CD4-positive, alpha-beta T cell (primary cell): ENCODE measurements at regions of chr5 and their contacts with region 1.

Region 1: DNA sequence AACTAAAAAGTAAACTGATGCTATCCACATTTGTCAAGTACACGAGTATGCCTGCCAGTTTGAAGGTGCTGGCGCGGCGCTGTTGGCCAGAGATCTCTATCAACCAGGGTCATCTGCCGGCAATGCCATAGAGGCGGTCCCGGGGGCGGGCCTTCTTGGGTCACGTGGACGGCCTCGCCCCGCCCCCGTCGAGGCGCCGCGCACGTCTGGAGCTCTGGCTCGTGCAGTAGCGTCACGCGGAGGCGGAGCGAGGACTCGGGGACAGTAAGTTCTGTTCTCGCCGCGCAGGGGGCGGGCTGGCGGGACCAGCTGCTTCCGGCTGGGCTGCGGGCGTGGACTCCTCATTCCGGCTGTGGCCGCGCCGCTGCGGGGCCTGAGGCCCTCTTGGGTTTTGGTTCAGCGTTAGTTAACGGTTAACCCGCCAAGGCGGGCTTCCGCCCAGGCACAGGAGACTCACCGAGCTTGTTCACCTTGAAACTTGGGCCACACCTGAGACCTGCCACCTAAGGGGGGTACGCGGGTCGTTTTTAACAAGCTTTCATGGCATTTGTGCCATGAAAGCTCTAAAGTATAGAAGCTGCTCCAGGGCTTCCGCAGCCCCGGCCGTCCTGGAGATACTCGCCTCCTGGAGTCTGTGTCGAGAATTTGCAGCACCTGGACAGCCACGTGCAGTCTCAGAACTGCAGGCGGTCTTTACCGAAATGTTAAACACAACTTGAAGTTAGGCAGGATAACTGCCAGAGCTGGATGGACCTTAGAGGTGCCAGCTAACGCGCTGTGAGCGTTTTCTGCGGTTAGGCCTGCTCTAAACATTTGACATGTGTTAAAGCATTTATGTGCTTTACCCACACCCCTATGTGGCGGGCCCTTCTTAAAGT is at the start of gene RFESD:
- DNase-seq: peak; percentile 82 to 97 (median 90)
- ATAC-seq: peak; percentile 92
- H3K4me3 ChIP-seq: peak within 1 kb of the TSS; percentile 74
- H3K4me3 Mint-ChIP-seq: peak within 1 kb of the TSS; percentile 88
- H3K27ac ChIP-seq: peak within 1 kb of the TSS; percentile 71 to 74
- H3K27ac Mint-ChIP-seq: peak within 1 kb of the TSS; percentile 68
- H3K4me1 ChIP-seq: peaks cover 18% of the 10 kb centered on the region
- H3K4me1 Mint-ChIP-seq: peaks cover 51% of the 10 kb centered on the region
- H3K27me3 ChIP-seq: no peaks in the 10 kb centered on the region
- H3K27me3 Mint-ChIP-seq: no peaks in the 10 kb centered on the region
- CTCF ChIP-seq: no peak
- total RNA-seq, gene RFESD: 1.3 to 1.5 TPM

Region 2: DNA sequence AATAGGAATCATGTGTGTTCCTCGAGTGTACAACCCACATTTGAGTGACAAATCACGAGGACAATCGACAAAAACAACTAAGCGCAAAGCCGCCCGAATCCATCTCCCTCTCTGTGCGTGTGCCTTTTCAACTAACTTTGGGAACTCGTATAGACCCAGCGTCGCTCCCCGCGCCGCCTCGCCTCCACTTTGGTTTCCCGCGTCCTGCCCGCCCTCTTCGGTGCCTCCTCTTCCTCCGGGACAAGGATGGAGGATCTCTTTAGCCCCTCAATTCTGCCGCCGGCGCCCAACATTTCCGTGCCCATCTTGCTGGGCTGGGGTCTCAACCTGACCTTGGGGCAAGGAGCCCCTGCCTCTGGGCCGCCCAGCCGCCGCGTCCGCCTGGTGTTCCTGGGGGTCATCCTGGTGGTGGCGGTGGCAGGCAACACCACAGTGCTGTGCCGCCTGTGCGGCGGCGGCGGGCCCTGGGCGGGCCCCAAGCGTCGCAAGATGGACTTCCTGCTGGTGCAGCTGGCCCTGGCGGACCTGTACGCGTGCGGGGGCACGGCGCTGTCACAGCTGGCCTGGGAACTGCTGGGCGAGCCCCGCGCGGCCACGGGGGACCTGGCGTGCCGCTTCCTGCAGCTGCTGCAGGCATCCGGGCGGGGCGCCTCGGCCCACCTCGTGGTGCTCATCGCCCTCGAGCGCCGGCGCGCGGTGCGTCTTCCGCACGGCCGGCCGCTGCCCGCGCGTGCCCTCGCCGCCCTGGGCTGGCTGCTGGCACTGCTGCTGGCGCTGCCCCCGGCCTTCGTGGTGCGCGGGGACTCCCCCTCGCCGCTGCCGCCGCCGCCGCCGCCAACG is 26.5 kb before region 1 on chr5 and contains the start of gene GPR150:
- CTCF ChIA-PET with region 1: interaction called, 9 read pairs
- POLR2A ChIA-PET with region 1: interaction called, 87 read pairs
- intact Hi-C with region 1: no loop called
- DNase-seq: peak; percentile 33 to 86 (median 58)
- ATAC-seq: peak; percentile 60
- H3K4me3 ChIP-seq: peak within 1 kb of the TSS; percentile 83
- H3K4me3 Mint-ChIP-seq: peak within 1 kb of the TSS; percentile 95
- H3K27ac ChIP-seq: peak within 1 kb of the TSS in 1 of 2 donors; percentile 37
- H3K27ac Mint-ChIP-seq: peak within 1 kb of the TSS; percentile 69
- H3K4me1 ChIP-seq: peaks cover 48% of the 10 kb centered on the region
- H3K4me1 Mint-ChIP-seq: peaks cover 77% of the 10 kb centered on the region
- H3K27me3 ChIP-seq: no peaks in the 10 kb centered on the region
- H3K27me3 Mint-ChIP-seq: no peaks in the 10 kb centered on the region
- CTCF ChIP-seq: no peak
- total RNA-seq, gene GPR150: 0.60 to 0.75 TPM

Region 3: GRCh38 chr5:95631991-95632675 is 14.7 kb before region 1 on chr5:
- CTCF ChIA-PET with region 1: interaction called, 7 read pairs
- POLR2A ChIA-PET with region 1: interaction called, 32 read pairs
- intact Hi-C with region 1: loop called in 1 of 2 experiments (anchors 1 kb)
- DNase-seq: peak; percentile 44 to 90 (median 62)
- ATAC-seq: peak; percentile 98
- H3K4me3 ChIP-seq: no peak overlapping the region
- H3K4me3 Mint-ChIP-seq: peak overlapping the region; percentile 9
- H3K27ac ChIP-seq: peak overlapping the region; percentile 16 to 80
- H3K27ac Mint-ChIP-seq: peak overlapping the region; percentile 89
- H3K4me1 ChIP-seq: peaks cover 19% of the 10 kb centered on the region
- H3K4me1 Mint-ChIP-seq: peaks cover 42% of the 10 kb centered on the region
- H3K27me3 ChIP-seq: no peaks in the 10 kb centered on the region
- H3K27me3 Mint-ChIP-seq: no peaks in the 10 kb centered on the region
- CTCF ChIP-seq: no peak

Region 4: DNA sequence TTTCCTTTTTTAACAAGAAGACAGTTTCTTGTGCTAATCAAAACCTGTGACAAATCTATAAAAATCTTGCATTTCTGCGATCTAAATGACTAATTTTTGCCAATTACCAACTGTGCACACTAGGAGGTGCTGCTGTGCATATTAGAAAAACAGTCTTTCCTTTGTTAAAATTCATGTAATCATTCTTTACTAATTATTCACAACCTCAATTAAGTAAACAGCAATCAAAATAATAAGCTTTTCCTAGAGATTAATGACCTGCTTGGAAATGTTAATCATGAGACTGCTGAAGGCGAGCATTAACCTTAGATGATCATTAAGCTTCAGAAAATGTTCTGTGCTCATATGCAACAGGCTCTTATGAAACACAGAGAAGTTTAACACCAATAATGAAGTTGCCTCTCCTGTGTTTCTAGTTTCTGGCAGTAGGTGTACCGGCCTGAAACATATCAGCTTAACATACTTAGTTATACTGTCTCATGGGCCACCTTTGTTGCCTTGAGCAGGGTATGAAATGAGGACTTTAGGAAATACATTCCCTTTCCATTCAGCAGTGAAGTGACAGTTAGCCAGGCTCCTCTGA is 17.5 kb after region 1 on chr5:
- CTCF ChIA-PET with region 1: interaction called, 10 read pairs
- POLR2A ChIA-PET with region 1: interaction called, 9 read pairs
- intact Hi-C with region 1: no loop called
- DNase-seq: peak in 9 of 14 experiments; percentile 6 to 62 (median 20)
- ATAC-seq: no peak
- H3K4me3 ChIP-seq: no peak overlapping the region
- H3K4me3 Mint-ChIP-seq: no peak overlapping the region
- H3K27ac ChIP-seq: no peak overlapping the region
- H3K27ac Mint-ChIP-seq: no peak overlapping the region
- H3K4me1 ChIP-seq: no peaks in the 10 kb centered on the region
- H3K4me1 Mint-ChIP-seq: peaks cover 6% of the 10 kb centered on the region
- H3K27me3 ChIP-seq: no peaks in the 10 kb centered on the region
- H3K27me3 Mint-ChIP-seq: no peaks in the 10 kb centered on the region
- CTCF ChIP-seq: peak; percentile 95

Region 5: GRCh38 chr5:95822542-95823181 is 175.9 kb after region 1 on chr5 and contains the start of gene GLRX:
- CTCF ChIA-PET with region 1: interaction called, 8 read pairs
- POLR2A ChIA-PET with region 1: interaction called, 13 read pairs
- intact Hi-C with region 1: loop called in 1 of 2 experiments (anchors 5 kb)
- DNase-seq: peak; percentile 22 to 76 (median 50)
- ATAC-seq: peak; percentile 39
- H3K4me3 ChIP-seq: peak within 1 kb of the TSS; percentile 84
- H3K4me3 Mint-ChIP-seq: peak within 1 kb of the TSS; percentile 98
- H3K27ac ChIP-seq: peak within 1 kb of the TSS; percentile 84 to 86
- H3K27ac Mint-ChIP-seq: peak within 1 kb of the TSS; percentile 83
- H3K4me1 ChIP-seq: peaks cover 64% of the 10 kb centered on the region
- H3K4me1 Mint-ChIP-seq: peaks cover 73% of the 10 kb centered on the region
- H3K27me3 ChIP-seq: no peaks in the 10 kb centered on the region
- H3K27me3 Mint-ChIP-seq: no peaks in the 10 kb centered on the region
- CTCF ChIP-seq: no peak
- total RNA-seq, gene GLRX: 16.9 to 18.7 TPM

Region 6: GRCh38 chr5:96336351-96336985 is 689.7 kb after region 1 on chr5:
- CTCF ChIA-PET with region 1: no interaction called
- POLR2A ChIA-PET with region 1: no interaction called
- intact Hi-C with region 1: loop called in 1 of 2 experiments (anchors 5 kb)
- DNase-seq: peak in 13 of 14 experiments; percentile 16 to 83 (median 48)
- ATAC-seq: peak; percentile 95
- H3K4me3 ChIP-seq: no peak overlapping the region
- H3K4me3 Mint-ChIP-seq: no peak overlapping the region
- H3K27ac ChIP-seq: no peak overlapping the region
- H3K27ac Mint-ChIP-seq: no peak overlapping the region
- H3K4me1 ChIP-seq: no peaks in the 10 kb centered on the region
- H3K4me1 Mint-ChIP-seq: no peaks in the 10 kb centered on the region
- H3K27me3 ChIP-seq: no peaks in the 10 kb centered on the region
- H3K27me3 Mint-ChIP-seq: peaks cover 19% of the 10 kb centered on the region
- CTCF ChIP-seq: peak; percentile 81